Dendritic cell treated with granulocyte-macrophage colony-stimulating factor and Interleukin-4, amounts not matched to agents 40 ng/mL and 50 ng/mL, for 4 days (primary cell): ENCODE measurements at regions of chr10 and their contacts with region 1.

Region 1: DNA sequence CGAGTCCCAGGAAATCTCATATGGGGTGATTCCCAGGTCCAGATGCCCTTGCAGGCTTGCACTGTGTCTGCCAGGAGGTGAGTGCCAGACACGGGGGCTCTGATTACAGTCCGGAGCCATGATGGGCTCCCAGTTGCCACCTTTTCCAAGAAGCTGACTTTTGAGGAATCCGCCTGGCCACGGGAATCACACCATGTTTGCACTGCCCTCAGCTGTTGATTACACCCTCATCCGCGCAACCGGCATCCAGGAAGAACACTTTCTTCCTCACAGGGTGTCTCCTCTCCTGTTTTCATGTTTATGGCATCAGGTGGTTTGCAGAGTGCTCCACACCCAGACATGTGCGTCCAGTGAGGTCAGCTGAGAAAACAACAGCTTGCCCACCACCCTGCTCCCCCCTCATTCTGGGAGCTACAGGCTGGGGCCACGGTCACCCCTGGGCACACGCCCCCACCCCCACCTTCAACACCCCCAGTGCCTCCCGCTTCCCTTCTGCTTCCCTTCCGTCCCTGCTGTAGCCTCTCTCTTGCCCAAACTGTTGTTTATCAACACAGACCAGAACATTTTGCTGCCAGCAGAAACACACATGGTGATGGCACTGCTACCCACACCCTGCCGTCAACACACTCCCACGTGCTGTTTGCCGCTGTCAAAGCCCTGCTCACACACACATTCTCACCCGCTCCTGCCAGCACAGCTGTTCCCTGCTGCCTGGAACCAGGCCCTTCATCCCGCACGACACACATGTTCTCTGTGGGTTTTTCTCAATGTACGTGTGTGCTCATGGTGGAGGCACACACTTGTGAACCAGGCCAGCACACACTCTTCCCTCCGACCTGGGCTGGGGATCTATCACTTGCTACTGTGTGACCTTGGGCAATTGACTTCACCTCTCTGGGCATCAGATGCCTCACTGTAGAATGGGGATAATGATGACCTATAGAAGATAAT is 35.8 kb downstream of the DDIT4 start:
- H3K4me3 Mint-ChIP-seq: no peak overlapping the region
- H3K27ac Mint-ChIP-seq: peak overlapping the region; percentile 72
- H3K4me1 Mint-ChIP-seq: peaks cover 32% of the 10 kb centered on the region
- H3K27me3 Mint-ChIP-seq: peaks cover 7% of the 10 kb centered on the region

Region 2: DNA sequence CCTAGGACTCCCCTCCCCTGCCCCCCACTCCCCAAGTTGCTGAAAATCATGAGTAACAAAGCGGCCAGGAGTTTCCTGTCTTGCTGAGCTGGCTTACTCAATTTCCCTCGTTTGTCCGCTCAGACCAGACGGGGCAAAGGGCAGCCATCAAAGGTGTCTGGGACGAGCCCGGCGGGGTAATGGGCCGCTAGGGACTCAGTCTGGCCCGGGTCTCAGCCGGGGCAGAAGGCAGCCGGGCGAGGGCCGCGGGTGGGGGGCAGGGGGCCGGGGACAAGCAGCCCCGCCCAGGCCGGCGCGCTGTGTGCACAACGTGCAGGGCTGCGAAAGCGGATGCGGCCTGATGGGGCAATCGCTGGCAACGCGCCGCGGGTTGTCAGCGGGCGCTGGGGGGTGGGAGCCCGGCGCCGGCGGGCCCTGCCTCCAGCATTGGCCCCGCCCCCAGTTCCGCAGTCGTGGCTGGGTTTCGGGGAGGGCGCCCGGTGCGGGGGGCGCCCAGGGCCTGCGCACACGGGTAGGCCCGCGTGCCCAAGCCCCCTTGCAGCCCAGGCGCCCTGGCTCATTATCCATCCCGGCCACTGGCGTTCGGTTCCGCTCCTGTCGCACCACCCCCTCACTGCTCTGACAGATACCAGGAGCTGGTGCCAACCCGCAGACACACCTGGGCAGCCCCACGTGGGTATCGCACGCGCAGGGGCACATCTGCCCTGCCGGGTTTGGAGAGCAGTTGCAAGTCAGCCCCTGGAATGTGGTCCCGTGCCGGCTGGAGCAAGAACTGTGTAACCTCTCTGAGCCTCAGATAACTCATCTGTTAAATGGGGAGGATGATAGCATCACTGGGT is 10.1 kb after region 1 on chr10:
- intact Hi-C with region 1: loop called (anchors 1 kb)
- H3K4me3 Mint-ChIP-seq: peak overlapping the region; percentile 65
- H3K27ac Mint-ChIP-seq: peak overlapping the region; percentile 80
- H3K4me1 Mint-ChIP-seq: peaks cover 89% of the 10 kb centered on the region
- H3K27me3 Mint-ChIP-seq: peaks cover 10% of the 10 kb centered on the region